ENCODE measurements at regions of chr3 and their contacts with region 1.

Region 1: DNA sequence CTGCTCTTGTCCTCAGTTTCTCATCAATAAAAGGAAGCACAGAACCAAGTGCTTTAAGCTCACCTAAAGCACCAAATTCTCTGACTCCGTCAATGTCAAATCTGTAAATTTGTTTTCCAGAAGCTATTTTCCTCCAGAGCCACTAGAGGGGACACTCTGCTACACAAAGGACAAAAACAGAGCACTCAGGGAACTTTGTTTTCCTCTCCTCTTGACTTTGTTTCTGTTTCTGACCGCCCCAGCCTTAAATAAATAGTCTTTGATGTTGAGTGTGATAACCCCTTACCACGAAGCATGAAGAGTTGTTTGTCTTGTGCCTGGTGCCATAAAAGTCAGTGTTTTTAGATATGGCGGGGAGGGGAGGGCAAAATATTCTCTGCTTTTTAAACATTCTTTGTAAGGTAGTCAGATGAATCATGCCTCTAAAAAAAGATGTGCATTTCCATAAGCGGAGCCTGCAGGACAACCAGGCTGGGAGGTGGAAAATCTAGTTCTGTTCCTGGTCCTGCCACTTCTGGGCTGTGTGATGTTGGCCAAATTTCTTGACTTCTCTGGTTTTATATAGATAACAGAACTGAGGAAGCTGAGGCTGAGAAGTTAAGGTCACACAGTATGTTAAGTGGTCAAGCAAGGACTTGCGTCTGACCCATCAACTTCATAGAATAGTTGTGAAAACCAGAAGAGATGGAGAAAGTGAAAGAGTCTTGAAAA is 7.3 kb upstream of the ZBTB38 start:
- DNase-seq: peak; percentile 83
- H3K4me3 Mint-ChIP-seq: peak overlapping the region; percentile 30
- H3K27ac Mint-ChIP-seq: peak overlapping the region; percentile 74
- H3K4me1 Mint-ChIP-seq: peaks cover 23% of the 10 kb centered on the region
- H3K27me3 Mint-ChIP-seq: no peaks in the 10 kb centered on the region
- CTCF ChIP-seq: peak; percentile 77

Region 2: DNA sequence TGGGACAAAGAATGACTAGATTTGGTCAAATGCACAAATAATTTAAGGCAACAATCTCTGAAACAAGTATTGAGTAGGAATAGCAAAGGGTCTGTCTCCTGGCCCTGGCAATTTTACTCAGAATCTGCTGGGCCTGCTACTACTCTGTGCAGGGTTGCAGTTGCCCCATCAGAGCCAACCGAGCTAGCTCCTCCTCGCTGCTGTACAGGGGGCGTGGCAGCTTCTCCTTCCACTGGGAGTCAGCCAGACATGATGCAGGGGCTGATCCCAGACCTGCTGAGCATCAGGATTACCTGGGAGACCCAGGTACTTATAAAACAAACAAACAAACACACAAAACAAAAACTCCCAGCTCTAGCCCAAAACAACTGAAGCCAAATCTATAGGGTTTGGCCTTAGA is 159.9 kb before region 1 on chr3:
- CTCF ChIA-PET with region 1: no interaction called
- POLR2A ChIA-PET with region 1: no interaction called
- intact Hi-C with region 1: no loop called
- DNase-seq: peak; percentile 11
- H3K4me3 Mint-ChIP-seq: no peak overlapping the region
- H3K27ac Mint-ChIP-seq: no peak overlapping the region
- H3K4me1 Mint-ChIP-seq: peaks cover 3% of the 10 kb centered on the region
- H3K27me3 Mint-ChIP-seq: peaks cover 45% of the 10 kb centered on the region
- CTCF ChIP-seq: no peak

Region 3: DNA sequence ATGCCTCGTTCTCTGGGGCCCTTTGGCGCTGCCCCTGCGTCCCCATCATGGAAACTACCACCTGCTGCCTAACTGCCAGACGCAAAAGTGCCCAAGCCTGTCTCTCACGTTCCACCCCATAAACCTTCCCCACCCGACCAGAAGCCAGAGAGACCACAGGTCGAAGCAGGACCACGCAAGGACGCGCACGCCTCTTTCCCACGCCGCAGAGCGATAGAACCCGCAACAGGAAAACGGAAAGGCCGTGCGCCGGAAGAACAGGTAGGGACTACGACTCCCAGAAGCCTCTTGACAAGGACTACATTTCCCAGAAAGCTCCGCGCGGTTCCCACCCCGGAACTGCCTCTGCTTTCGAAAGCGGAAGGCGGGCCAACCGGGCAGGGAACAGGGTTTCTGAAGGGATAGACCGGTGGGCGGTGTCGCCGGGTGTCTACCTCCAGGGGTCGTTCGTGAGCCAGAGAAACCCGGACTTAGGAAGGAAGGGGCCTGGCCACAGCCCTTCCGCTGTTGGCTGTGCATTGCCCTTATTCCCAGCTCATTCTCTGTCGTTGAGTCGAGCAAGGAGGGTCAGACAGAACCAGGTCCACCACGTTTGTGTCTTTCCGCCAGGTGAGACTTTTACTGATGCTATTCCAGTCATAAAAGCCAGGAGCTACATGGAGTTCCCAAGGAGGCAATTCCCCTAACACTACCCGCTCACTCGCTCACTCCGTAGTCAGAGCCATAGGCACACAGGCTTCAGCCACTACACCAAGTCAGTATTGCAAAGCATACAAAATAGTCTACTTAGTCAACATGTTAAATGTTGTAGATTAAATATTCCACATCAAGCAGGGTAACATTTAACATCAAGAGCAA is 49.3 kb before region 1 on chr3:
- CTCF ChIA-PET with region 1: interaction called, 21 read pairs
- POLR2A ChIA-PET with region 1: interaction called, 26 read pairs
- intact Hi-C with region 1: loop called (anchors 2 kb)
- DNase-seq: peak; percentile 98
- H3K4me3 Mint-ChIP-seq: peak overlapping the region; percentile 86
- H3K27ac Mint-ChIP-seq: peak overlapping the region; percentile 85
- H3K4me1 Mint-ChIP-seq: peaks cover 7% of the 10 kb centered on the region
- H3K27me3 Mint-ChIP-seq: no peaks in the 10 kb centered on the region
- CTCF ChIP-seq: peak; percentile 61

Region 4: DNA sequence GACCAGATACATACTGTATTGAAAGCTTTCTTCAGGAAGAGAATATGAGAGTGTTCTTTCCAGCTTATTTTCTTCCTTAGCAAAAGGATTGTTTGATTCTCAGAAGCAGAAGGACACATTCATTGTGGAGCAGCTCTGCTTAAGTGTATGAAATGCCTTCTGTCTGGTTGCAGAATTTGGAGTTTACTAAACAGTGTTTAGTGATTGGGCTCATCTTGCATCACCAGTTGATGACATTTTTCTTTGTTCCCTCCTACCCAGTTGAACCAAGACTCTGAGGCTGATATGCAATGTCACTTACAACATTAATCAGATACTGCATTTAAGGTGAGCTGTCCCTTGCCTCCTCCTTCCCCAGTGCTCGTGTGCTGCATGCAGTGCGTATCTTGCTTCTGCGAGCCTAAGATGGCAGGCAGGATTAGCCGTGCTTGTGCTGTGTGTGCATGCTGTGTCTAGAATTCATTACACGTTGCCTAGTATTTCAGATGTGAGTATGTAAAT is 25.6 kb after region 1 on chr3:
- CTCF ChIA-PET with region 1: interaction called, 19 read pairs
- POLR2A ChIA-PET with region 1: interaction called, 210 read pairs
- intact Hi-C with region 1: loop called (anchors 2 kb)
- DNase-seq: no peak
- H3K4me3 Mint-ChIP-seq: peak overlapping the region; percentile 28
- H3K27ac Mint-ChIP-seq: peak overlapping the region; percentile 73
- H3K4me1 Mint-ChIP-seq: peaks cover 46% of the 10 kb centered on the region
- H3K27me3 Mint-ChIP-seq: no peaks in the 10 kb centered on the region
- CTCF ChIP-seq: no peak

Region 5: GRCh38 chr3:141431411-141432378 is 70.7 kb after region 1 on chr3:
- CTCF ChIA-PET with region 1: interaction called, 10 read pairs
- POLR2A ChIA-PET with region 1: interaction called, 8 read pairs
- intact Hi-C with region 1: no loop called
- DNase-seq: no peak
- H3K4me3 Mint-ChIP-seq: no peak overlapping the region
- H3K27ac Mint-ChIP-seq: no peak overlapping the region
- H3K4me1 Mint-ChIP-seq: peaks cover 2% of the 10 kb centered on the region
- H3K27me3 Mint-ChIP-seq: no peaks in the 10 kb centered on the region
- CTCF ChIP-seq: no peak

Region 6: GRCh38 chr3:141452036-141452435 is 91.0 kb after region 1 on chr3:
- CTCF ChIA-PET with region 1: interaction called, 166 read pairs
- POLR2A ChIA-PET with region 1: interaction called, 17 read pairs
- intact Hi-C with region 1: loop called (anchors 1 kb)
- DNase-seq: peak; percentile 56
- H3K4me3 Mint-ChIP-seq: no peak overlapping the region
- H3K27ac Mint-ChIP-seq: no peak overlapping the region
- H3K4me1 Mint-ChIP-seq: peaks cover 26% of the 10 kb centered on the region
- H3K27me3 Mint-ChIP-seq: no peaks in the 10 kb centered on the region
- CTCF ChIP-seq: peak; percentile 50

Region 7: GRCh38 chr3:141561426-141562034 is 200.5 kb after region 1 on chr3:
- CTCF ChIA-PET with region 1: interaction called, 11 read pairs
- POLR2A ChIA-PET with region 1: interaction called, 3 read pairs
- intact Hi-C with region 1: loop called (anchors 2 kb)
- DNase-seq: peak; percentile 64
- H3K4me3 Mint-ChIP-seq: no peak overlapping the region
- H3K27ac Mint-ChIP-seq: no peak overlapping the region
- H3K4me1 Mint-ChIP-seq: no peaks in the 10 kb centered on the region
- H3K27me3 Mint-ChIP-seq: no peaks in the 10 kb centered on the region
- CTCF ChIP-seq: peak; percentile 88

Region 8: DNA sequence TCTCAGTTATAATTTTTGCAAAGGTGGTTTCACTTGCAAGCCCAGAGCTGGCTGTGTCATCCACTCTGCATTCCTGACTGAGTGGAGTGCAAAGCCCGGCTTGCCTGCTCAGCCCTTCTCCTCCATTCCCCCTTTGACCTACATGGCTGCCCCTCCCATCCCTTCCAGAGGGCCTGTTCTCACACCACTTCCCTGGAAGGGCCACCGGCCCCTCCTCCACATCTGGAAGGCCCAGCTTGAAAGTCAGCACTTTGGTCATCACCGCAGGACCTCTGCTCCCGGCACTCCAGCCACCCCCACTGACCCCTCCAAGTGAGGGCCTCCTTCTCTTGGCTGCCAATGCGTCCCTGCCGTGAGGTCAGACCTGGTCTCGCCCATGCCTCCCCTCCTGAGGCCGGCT is 302.9 kb after region 1 on chr3:
- CTCF ChIA-PET with region 1: no interaction called
- POLR2A ChIA-PET with region 1: no interaction called
- intact Hi-C with region 1: no loop called
- DNase-seq: no peak
- H3K4me3 Mint-ChIP-seq: no peak overlapping the region
- H3K27ac Mint-ChIP-seq: no peak overlapping the region
- H3K4me1 Mint-ChIP-seq: peaks cover 10% of the 10 kb centered on the region
- H3K27me3 Mint-ChIP-seq: peaks cover 27% of the 10 kb centered on the region
- CTCF ChIP-seq: no peak

Measured in MCF 10A (cell line).